Activated CD8-positive, alpha-beta T cell treated with anti-CD3 and anti-CD28 coated beads for 36 hours (primary cell): ENCODE measurements at regions of chr1 and their contacts with region 1.

Region 1: GRCh38 chr1:47417170-47418044 is 1.3 kb downstream of the FOXE3 start:
- DNase-seq: no peak
- ATAC-seq: no peak
- H3K4me3 Mint-ChIP-seq: no peak overlapping the region
- H3K27ac Mint-ChIP-seq: no peak overlapping the region
- H3K4me1 Mint-ChIP-seq: peaks cover 6% of the 10 kb centered on the region
- H3K27me3 Mint-ChIP-seq: peaks cover 32% of the 10 kb centered on the region
- CTCF ChIP-seq: no peak

Region 2: DNA sequence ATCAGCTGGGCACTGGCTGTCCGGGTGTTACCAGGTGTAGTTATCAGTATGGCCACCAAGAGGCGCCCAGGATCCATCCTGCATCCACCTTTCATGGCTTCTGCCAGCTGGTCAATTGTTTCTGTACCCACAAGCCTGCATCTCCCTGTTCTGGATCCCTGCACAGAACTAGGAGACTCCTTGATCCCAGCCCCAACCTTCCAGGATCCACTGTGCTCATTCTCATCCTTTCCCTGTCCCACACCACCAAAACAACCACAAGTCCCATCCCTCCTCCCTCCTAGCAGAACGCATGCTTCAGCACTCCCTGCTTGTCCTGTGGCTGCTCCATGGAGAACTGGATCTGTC is 28.5 kb before region 1 on chr1:
- CTCF ChIA-PET with region 1: interaction called, 10 read pairs
- POLR2A ChIA-PET with region 1: no interaction called
- intact Hi-C with region 1: no loop called
- DNase-seq: peak; percentile 73
- ATAC-seq: peak; percentile 89
- H3K4me3 Mint-ChIP-seq: no peak overlapping the region
- H3K27ac Mint-ChIP-seq: no peak overlapping the region
- H3K4me1 Mint-ChIP-seq: no peaks in the 10 kb centered on the region
- H3K27me3 Mint-ChIP-seq: no peaks in the 10 kb centered on the region
- CTCF ChIP-seq: peak; percentile 65